WTC11 (cell line): ENCODE measurements at regions of chr14 and their contacts with region 1.

Region 1: GRCh38 chr14:73503648-73504047 is 12.9 kb downstream of the RIOX1 start:
- DNase-seq: no peak
- ATAC-seq: no peak
- H3K4me3 Mint-ChIP-seq: no peak overlapping the region
- H3K27ac Mint-ChIP-seq: no peak overlapping the region
- H3K4me1 Mint-ChIP-seq: peaks cover 25% of the 10 kb centered on the region
- H3K27me3 Mint-ChIP-seq: no peaks in the 10 kb centered on the region
- CTCF ChIP-seq: no peak

Region 2: GRCh38 chr14:73521229-73521628 is 17.6 kb after region 1 on chr14:
- CTCF ChIA-PET with region 1: interaction called, 46 read pairs
- POLR2A ChIA-PET with region 1: interaction called, 3 read pairs
- DNase-seq: no peak
- ATAC-seq: no peak
- H3K4me3 Mint-ChIP-seq: no peak overlapping the region
- H3K27ac Mint-ChIP-seq: no peak overlapping the region
- H3K4me1 Mint-ChIP-seq: peaks cover 15% of the 10 kb centered on the region
- H3K27me3 Mint-ChIP-seq: no peaks in the 10 kb centered on the region; the same call in 1 of the 2 replicates
- CTCF ChIP-seq: no peak

Region 3: GRCh38 chr14:73568381-73568781 is 64.7 kb after region 1 on chr14:
- CTCF ChIA-PET with region 1: interaction called, 79 read pairs
- POLR2A ChIA-PET with region 1: interaction called, 3 read pairs
- DNase-seq: no peak
- ATAC-seq: no peak
- H3K4me3 Mint-ChIP-seq: peak overlapping the region; percentile 78
- H3K27ac Mint-ChIP-seq: no peak overlapping the region
- H3K4me1 Mint-ChIP-seq: peaks cover 30% of the 10 kb centered on the region
- H3K27me3 Mint-ChIP-seq: peaks cover 13% of the 10 kb centered on the region
- CTCF ChIP-seq: no peak

Region 4: GRCh38 chr14:73633116-73634010 is 129.7 kb after region 1 on chr14:
- CTCF ChIA-PET with region 1: interaction called, 66 read pairs
- POLR2A ChIA-PET with region 1: interaction called, 3 read pairs
- DNase-seq: peak; percentile 67
- ATAC-seq: peak; percentile 61
- H3K4me3 Mint-ChIP-seq: peak overlapping the region; percentile 77
- H3K27ac Mint-ChIP-seq: peak overlapping the region; percentile 96
- H3K4me1 Mint-ChIP-seq: peaks cover 12% of the 10 kb centered on the region
- H3K27me3 Mint-ChIP-seq: peaks cover 2% of the 10 kb centered on the region; the same call in 1 of the 2 replicates
- CTCF ChIP-seq: peak; percentile 65